ENCODE measurements at regions of chr20 and their contacts with region 1.

Region 1: GRCh38 chr20:45111799-45112471 is 3.0 kb downstream of the WFDC5 start:
- DNase-seq: peak; percentile 26
- H3K4me3 ChIP-seq: no peak overlapping the region
- H3K27ac ChIP-seq: no peak overlapping the region
- H3K4me1 ChIP-seq: no peaks in the 10 kb centered on the region
- H3K27me3 ChIP-seq: peaks cover 0 to 4% of the 10 kb centered on the region in 2 experiments
- CTCF ChIP-seq: peak; percentile 47 to 51
- POLR2A ChIP-seq: no peak

Region 2: DNA sequence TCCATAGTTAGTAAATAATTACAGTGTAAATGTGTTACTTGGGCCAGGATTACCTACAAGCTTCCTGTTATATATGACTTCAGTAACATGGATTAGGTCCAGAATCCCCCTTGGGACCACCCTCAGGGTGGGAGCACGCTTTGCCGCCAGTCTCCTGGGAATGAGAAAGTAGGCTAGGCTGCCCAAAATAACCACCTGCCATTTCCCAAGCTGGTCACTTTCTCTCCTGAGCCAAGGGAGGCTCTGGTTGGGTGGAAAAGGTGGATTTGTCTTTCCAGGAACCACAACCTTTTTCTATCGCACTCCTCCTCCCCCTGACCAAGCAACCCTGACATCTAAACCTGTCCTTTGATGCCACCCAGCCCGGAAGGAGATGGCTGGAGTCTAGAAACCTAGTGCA is 292.0 kb before region 1 on chr20:
- CTCF ChIA-PET with region 1: no interaction called
- POLR2A ChIA-PET with region 1: no interaction called
- dilution Hi-C with region 1: no loop called
- intact Hi-C with region 1: no loop called
- DNase-seq: no peak
- H3K4me3 ChIP-seq: no peak overlapping the region
- H3K27ac ChIP-seq: no peak overlapping the region
- H3K4me1 ChIP-seq: no peaks in the 10 kb centered on the region
- H3K27me3 ChIP-seq: peaks cover 3 to 8% of the 10 kb centered on the region in 2 experiments
- CTCF ChIP-seq: no peak
- POLR2A ChIP-seq: no peak

Region 3: GRCh38 chr20:44909872-44910689 is 201.9 kb before region 1 on chr20 and contains the start of gene PABPC1L:
- CTCF ChIA-PET with region 1: no interaction called
- POLR2A ChIA-PET with region 1: no interaction called
- dilution Hi-C with region 1: no loop called
- intact Hi-C with region 1: loop called (anchors 5 kb)
- DNase-seq: no peak
- H3K4me3 ChIP-seq: peak within 1 kb of the TSS; percentile 43 to 62 (median 51)
- H3K27ac ChIP-seq: no peak within 1 kb of the TSS
- H3K4me1 ChIP-seq: peaks cover 12% of the 10 kb centered on the region
- H3K27me3 ChIP-seq: no peaks in the 10 kb centered on the region
- CTCF ChIP-seq: no peak
- POLR2A ChIP-seq: peak; percentile 47
- total RNA-seq, gene PABPC1L: 7.5 and 7.8 TPM in 2 replicates

Region 4: DNA sequence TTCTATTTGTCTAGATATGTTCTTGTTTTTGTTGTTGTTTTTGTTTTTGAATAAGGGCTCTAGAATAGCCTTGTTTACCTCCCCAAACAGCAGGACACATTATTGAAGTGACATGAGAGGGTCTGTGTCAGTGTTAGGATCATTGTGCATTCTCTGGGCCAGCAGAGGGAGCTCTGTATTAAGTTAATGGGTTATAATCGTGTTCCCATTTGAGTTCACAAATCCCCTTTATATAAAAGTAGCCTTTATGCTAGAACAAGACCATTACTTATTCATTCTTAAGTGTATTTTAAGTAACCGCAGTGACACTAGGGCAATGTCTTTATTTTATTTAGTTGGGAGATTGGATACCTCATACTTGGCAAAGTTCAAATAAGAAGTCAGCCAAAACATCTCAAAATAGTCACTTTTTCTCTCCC is 100.8 kb before region 1 on chr20:
- CTCF ChIA-PET with region 1: interaction called, 76 read pairs
- POLR2A ChIA-PET with region 1: no interaction called
- dilution Hi-C with region 1: no loop called
- intact Hi-C with region 1: loop called (anchors 1 kb)
- DNase-seq: peak; percentile 74
- H3K4me3 ChIP-seq: no peak overlapping the region
- H3K27ac ChIP-seq: no peak overlapping the region
- H3K4me1 ChIP-seq: no peaks in the 10 kb centered on the region
- H3K27me3 ChIP-seq: no peaks in the 10 kb centered on the region
- CTCF ChIP-seq: peak; percentile 67 to 68
- POLR2A ChIP-seq: no peak

Region 5: GRCh38 chr20:45052698-45053429 is 59.1 kb before region 1 on chr20:
- CTCF ChIA-PET with region 1: interaction called, 12 read pairs
- POLR2A ChIA-PET with region 1: no interaction called
- dilution Hi-C with region 1: no loop called
- intact Hi-C with region 1: no loop called
- DNase-seq: no peak
- H3K4me3 ChIP-seq: no peak overlapping the region
- H3K27ac ChIP-seq: no peak overlapping the region
- H3K4me1 ChIP-seq: peaks cover 12% of the 10 kb centered on the region
- H3K27me3 ChIP-seq: no peaks in the 10 kb centered on the region
- CTCF ChIP-seq: no peak
- POLR2A ChIP-seq: no peak

Region 6: DNA sequence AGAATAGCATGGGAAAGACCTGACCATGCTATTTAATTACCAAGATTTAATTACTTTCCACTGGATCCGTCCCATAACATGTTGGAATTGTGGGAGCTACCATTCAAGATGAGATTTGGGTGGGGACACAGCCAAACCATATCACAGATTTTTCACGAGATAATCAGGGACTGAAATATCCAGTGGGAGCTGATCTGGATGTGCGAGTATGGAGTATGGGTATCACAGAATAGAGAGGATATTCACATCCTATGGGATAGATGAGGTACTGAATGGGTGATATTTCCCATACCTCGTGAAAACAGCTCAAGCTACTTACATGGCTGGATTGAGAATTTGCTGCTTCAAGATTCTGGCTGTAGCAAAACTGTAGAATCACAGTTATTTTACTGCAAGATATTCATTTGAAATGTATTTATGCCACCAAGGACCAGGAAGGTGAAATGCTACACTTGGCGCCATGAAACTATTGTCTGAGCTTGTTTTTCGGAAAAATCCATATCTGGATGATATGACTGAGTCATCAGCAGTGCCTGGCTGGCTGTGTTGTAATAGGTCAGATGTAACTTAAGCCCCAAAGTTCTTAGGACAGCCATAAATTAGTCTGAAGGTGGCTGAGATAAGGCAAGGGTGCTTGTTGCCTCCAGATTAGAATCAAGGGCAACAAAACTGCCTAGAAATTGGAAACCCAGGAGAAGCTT is 40.9 kb before region 1 on chr20:
- CTCF ChIA-PET with region 1: interaction called, 11 read pairs
- POLR2A ChIA-PET with region 1: no interaction called
- dilution Hi-C with region 1: no loop called
- intact Hi-C with region 1: no loop called
- DNase-seq: peak; percentile 94
- H3K4me3 ChIP-seq: no peak overlapping the region
- H3K27ac ChIP-seq: peak overlapping the region; percentile 15
- H3K4me1 ChIP-seq: peaks cover 8% of the 10 kb centered on the region
- H3K27me3 ChIP-seq: no peaks in the 10 kb centered on the region
- CTCF ChIP-seq: no peak
- POLR2A ChIP-seq: no peak

Region 7: GRCh38 chr20:45138561-45139300 is 26.8 kb after region 1 on chr20:
- CTCF ChIA-PET with region 1: interaction called, 10 read pairs
- POLR2A ChIA-PET with region 1: no interaction called
- dilution Hi-C with region 1: no loop called
- intact Hi-C with region 1: no loop called
- DNase-seq: peak; percentile 4
- H3K4me3 ChIP-seq: no peak overlapping the region
- H3K27ac ChIP-seq: no peak overlapping the region
- H3K4me1 ChIP-seq: no peaks in the 10 kb centered on the region
- H3K27me3 ChIP-seq: peaks cover 11 to 12% of the 10 kb centered on the region in 2 experiments
- CTCF ChIP-seq: peak; percentile 69 to 70
- POLR2A ChIP-seq: no peak

Measured in endothelial cell of umbilical vein (primary cell).